A549 (cell line): ENCODE measurements at regions of chr12 and their contacts with region 1.

Region 1: DNA sequence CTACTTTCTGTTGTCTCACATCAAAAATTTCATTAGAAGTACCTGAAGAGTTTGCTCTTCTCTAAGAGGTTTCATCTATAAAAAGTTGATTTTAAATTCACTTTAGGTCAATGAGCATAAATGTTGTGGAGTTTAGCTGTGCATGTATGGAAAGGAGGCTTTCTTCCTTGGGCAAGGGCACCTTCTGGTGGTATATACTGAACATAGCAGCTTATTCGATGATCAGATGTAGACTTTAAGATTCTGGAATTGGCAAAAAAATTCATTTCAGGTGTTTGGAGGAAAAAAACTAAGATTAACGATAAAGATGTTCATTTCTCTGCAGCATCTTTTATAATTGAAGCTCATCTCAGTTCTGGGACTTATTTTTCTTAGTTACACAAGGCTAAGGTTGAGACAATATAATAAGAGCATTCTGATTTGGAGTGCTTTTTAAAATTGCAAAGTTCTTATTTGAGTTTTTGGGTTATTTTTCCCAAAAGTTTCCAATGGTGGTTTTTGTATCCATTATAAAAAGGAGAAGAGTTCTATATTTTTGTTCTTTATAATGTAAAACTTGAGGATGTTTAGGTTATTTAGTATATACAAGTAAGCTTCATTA is 46.8 kb downstream of the TMEM117 start:
- DNase-seq: peak; percentile 22 to 75
- ATAC-seq: peak; percentile 88 to 95
- H3K4me3 ChIP-seq: no peak overlapping the region
- H3K27ac ChIP-seq: no peak overlapping the region
- H3K4me1 ChIP-seq: no peaks in the 10 kb centered on the region
- CTCF ChIP-seq: peak; percentile 89
- EP300 ChIP-seq: no peak
- POLR2A ChIP-seq: no peak
- RAD21 ChIP-seq: peak; percentile 94 to 99

Region 2: GRCh38 chr12:43444940-43445564 is 437.6 kb before region 1 on chr12:
- CTCF ChIA-PET with region 1: interaction called, 11 read pairs
- POLR2A ChIA-PET with region 1: no interaction called
- DNase-seq: peak in 1 of 2 experiments; percentile 70
- ATAC-seq: peak in 1 of 2 experiments; percentile 60; a peak in 3 of 6 replicates
- H3K4me3 ChIP-seq: no peak overlapping the region
- H3K27ac ChIP-seq: no peak overlapping the region
- H3K4me1 ChIP-seq: no peaks in the 10 kb centered on the region
- CTCF ChIP-seq: peak; percentile 72
- EP300 ChIP-seq: no peak
- POLR2A ChIP-seq: no peak
- RAD21 ChIP-seq: peak; percentile 30 to 48; a peak in 4 of 5 replicates

Region 3: GRCh38 chr12:43758728-43759563 is 123.7 kb before region 1 on chr12 and contains the starts of genes IRAK4 and PUS7L:
- CTCF ChIA-PET with region 1: interaction called, 18 read pairs
- POLR2A ChIA-PET with region 1: interaction called, 5 read pairs
- DNase-seq: peak; percentile 88 to 98
- ATAC-seq: peak; percentile 97
- H3K4me3 ChIP-seq: peak within 1 kb of the TSS; percentile 61
- H3K27ac ChIP-seq: peak within 1 kb of the TSS; percentile 67 to 89
- H3K4me1 ChIP-seq: peaks cover 12% of the 10 kb centered on the region; the same call in 2 of the 3 replicates
- CTCF ChIP-seq: peak; percentile 18
- EP300 ChIP-seq: no peak
- POLR2A ChIP-seq: peak; percentile 56
- RAD21 ChIP-seq: peak; percentile 16 to 24; a peak in 1 of 5 replicates
- polyA plus RNA-seq, gene IRAK4: 15.7 and 18.4 TPM in 2 replicates
- polyA plus RNA-seq, gene PUS7L: 12.1 and 16.6 TPM in 2 replicates

Region 4: DNA sequence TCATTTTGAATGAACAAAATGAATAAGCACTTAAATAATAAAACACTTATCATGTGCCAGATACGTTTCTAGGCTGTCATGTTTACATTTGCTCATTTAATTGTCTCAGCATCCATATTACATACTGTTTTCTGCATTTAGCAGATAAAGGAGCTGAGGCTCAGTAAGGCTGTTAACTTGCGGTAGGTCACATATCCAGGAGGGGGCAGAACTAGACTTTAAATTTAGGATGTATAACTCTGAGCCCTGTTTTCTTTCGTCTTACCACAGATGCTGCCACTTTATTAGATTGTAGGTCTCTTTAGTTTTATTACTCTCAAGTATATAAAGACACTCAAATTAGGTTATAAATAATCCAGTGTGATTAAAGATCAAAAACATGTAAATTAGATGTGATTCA is 106.2 kb before region 1 on chr12:
- CTCF ChIA-PET with region 1: interaction called, 60 read pairs
- POLR2A ChIA-PET with region 1: no interaction called
- DNase-seq: peak; percentile 30 to 56
- ATAC-seq: peak; percentile 89 to 96
- H3K4me3 ChIP-seq: no peak overlapping the region
- H3K27ac ChIP-seq: no peak overlapping the region
- H3K4me1 ChIP-seq: no peaks in the 10 kb centered on the region
- CTCF ChIP-seq: peak; percentile 56
- EP300 ChIP-seq: no peak
- POLR2A ChIP-seq: no peak
- RAD21 ChIP-seq: peak; percentile 59 to 70; a peak in 4 of 5 replicates